ENCODE measurements at regions of chr21 and their contacts with region 1.

Region 1: GRCh38 chr21:27802816-27803475 is 836.1 kb upstream of the ADAMTS5 start:
- DNase-seq: no peak
- H3K4me3 ChIP-seq: no peak overlapping the region
- H3K27me3 ChIP-seq: no peaks in the 10 kb centered on the region
- CTCF ChIP-seq: peak; percentile 73

Region 2: DNA sequence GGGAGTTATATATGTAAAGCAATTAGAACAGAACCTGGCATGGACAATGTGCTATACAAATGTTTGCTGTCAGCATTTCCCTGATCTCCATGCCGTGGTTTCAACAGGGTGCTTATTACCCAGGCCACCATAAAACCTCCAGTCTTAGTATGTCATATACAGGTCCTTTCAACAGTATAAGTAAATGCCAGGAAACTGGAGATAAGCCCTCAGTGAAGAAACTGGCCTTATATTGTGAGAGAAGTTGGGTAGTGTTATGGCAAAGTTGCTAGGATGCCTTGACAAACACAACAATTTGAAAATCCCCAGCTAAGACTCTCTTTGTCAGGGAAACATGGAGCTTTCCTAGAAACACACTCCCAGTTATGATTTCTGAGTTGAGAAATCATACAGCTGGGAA is 14.1 kb after region 1 on chr21:
- CTCF ChIA-PET with region 1: interaction called, 11 read pairs
- POLR2A ChIA-PET with region 1: no interaction called
- DNase-seq: no peak
- H3K4me3 ChIP-seq: no peak overlapping the region
- H3K27me3 ChIP-seq: no peaks in the 10 kb centered on the region
- CTCF ChIP-seq: no peak

Region 3: DNA sequence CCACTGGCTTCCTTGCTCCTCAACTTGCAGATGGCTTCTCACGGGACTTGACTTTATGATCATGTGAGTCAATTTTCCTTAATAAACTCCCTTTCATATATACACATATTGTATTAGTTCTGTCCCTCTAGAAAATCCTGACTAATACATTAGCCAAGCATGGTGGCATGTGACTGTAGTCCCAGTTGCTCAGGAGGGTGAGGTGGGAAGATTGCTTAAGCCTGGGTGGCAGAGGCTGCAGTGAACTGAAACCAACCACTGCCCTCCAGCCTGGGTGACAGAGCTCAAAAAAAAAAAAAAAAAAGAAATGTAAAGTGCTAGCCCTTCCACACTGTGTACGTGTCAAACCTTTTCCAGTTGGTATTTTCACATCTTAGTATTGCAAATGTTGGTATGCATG is 332.7 kb after region 1 on chr21:
- CTCF ChIA-PET with region 1: no interaction called
- POLR2A ChIA-PET with region 1: no interaction called
- DNase-seq: no peak
- H3K4me3 ChIP-seq: no peak overlapping the region
- H3K27me3 ChIP-seq: no peaks in the 10 kb centered on the region
- CTCF ChIP-seq: no peak